MCF 10A (cell line): ENCODE measurements at regions of chr6 and their contacts with region 1.

Region 1: DNA sequence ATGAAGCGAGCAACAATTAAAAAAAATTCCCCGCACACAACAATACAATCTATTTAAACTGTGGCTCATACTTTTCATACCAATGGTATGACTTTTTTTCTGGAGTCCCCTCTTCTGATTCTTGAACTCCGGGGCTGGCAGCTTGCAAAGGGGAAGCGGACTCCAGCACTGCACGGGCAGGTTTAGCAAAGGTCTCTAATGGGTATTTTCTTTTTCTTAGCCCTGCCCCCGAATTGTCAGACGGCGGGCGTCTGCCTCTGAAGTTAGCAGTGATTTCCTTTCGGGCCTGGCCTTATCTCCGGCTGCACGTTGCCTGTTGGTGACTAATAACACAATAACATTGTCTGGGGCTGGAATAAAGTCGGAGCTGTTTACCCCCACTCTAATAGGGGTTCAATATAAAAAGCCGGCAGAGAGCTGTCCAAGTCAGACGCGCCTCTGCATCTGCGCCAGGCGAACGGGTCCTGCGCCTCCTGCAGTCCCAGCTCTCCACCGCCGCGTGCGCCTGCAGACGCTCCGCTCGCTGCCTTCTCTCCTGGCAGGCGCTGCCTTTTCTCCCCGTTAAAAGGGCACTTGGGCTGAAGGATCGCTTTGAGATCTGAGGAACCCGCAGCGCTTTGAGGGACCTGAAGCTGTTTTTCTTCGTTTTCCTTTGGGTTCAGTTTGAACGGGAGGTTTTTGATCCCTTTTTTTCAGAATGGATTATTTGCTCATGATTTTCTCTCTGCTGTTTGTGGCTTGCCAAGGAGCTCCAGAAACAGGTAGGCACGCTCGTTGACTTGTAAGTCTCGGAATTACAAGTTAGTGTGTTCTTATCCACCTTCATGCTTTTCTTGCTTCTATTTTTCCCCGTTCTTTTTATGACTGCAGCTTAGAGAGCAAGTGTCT is at the start of gene EDN1:
- DNase-seq: peak; percentile 86
- H3K4me3 Mint-ChIP-seq: peak within 1 kb of the TSS; percentile 75
- H3K27ac Mint-ChIP-seq: peak within 1 kb of the TSS; percentile 94
- H3K4me1 Mint-ChIP-seq: peaks cover 55% of the 10 kb centered on the region
- H3K27me3 Mint-ChIP-seq: no peaks in the 10 kb centered on the region
- CTCF ChIP-seq: peak; percentile 39
- total RNA-seq, gene EDN1: 1.2 and 2.7 TPM in 2 replicates

Region 2: GRCh38 chr6:12011276-12012076 is 278.7 kb before region 1 on chr6:
- CTCF ChIA-PET with region 1: interaction called, 9 read pairs
- POLR2A ChIA-PET with region 1: interaction called, 13 read pairs
- intact Hi-C with region 1: loop called (anchors 5 kb)
- DNase-seq: peak; percentile 97
- H3K4me3 Mint-ChIP-seq: peak overlapping the region; percentile 89
- H3K27ac Mint-ChIP-seq: peak overlapping the region; percentile 99
- H3K4me1 Mint-ChIP-seq: peaks cover 19% of the 10 kb centered on the region
- H3K27me3 Mint-ChIP-seq: no peaks in the 10 kb centered on the region
- CTCF ChIP-seq: no peak

Region 3: GRCh38 chr6:12245763-12246718 is 44.1 kb before region 1 on chr6:
- CTCF ChIA-PET with region 1: interaction called, 18 read pairs
- POLR2A ChIA-PET with region 1: interaction called, 14 read pairs
- intact Hi-C with region 1: no loop called
- DNase-seq: no peak
- H3K4me3 Mint-ChIP-seq: no peak overlapping the region
- H3K27ac Mint-ChIP-seq: no peak overlapping the region
- H3K4me1 Mint-ChIP-seq: peaks cover 5% of the 10 kb centered on the region
- H3K27me3 Mint-ChIP-seq: no peaks in the 10 kb centered on the region
- CTCF ChIP-seq: no peak

Region 4: DNA sequence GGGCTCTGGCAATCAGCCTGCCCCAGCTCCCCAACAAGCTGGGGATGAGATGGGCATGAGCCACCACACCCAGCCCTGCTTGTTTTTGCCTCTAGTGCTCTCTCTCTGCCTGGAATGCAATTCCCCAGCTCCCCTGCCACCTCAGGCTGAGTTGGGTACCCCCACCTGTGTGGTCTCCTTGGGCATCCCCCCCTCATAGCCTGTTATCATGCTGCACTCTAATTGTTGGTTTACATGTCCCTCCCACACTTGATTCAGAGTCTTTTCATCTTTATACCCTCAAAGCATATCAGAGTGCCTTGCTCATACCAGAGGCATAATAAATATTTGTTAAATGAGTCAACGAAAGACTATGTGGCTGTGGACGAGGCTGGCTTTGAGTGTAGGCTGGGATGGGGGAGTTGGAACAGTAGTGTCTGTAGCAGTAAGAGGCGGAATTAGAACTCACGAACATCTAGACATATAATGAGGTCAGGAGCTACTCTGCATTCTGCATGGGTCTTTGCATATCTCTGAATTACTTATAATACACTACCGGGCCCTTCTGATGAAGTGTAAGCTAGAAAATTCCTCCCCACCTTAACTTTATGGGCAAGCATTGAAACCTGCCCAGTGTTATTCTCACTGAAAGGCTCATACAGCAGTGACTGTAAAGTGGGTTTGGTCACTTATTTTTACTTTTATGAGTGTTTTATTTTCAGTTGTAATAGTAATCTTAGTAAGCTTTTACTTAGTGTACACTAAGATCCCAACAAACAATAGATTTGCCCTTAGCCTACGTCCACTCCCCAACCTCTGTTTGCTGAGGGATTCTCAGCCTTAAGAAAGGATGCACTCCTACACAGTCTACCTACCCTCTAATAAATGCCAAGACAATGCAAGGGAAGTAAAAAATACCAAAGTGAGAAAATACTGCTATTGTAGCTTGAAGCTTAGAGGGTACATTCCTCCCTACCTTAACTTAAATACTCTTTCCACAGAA is 58.6 kb after region 1 on chr6:
- CTCF ChIA-PET with region 1: interaction called, 3 read pairs
- POLR2A ChIA-PET with region 1: interaction called, 96 read pairs
- intact Hi-C with region 1: no loop called
- DNase-seq: peak; percentile 82
- H3K4me3 Mint-ChIP-seq: peak overlapping the region; percentile 19
- H3K27ac Mint-ChIP-seq: peak overlapping the region; percentile 95
- H3K4me1 Mint-ChIP-seq: peaks cover 32% of the 10 kb centered on the region
- H3K27me3 Mint-ChIP-seq: no peaks in the 10 kb centered on the region
- CTCF ChIP-seq: no peak

Region 5: GRCh38 chr6:12570461-12571030 is 280.4 kb after region 1 on chr6:
- CTCF ChIA-PET with region 1: no interaction called
- POLR2A ChIA-PET with region 1: interaction called, 16 read pairs
- intact Hi-C with region 1: no loop called
- DNase-seq: peak; percentile 31
- H3K4me3 Mint-ChIP-seq: no peak overlapping the region
- H3K27ac Mint-ChIP-seq: peak overlapping the region; percentile 29
- H3K4me1 Mint-ChIP-seq: peaks cover 33% of the 10 kb centered on the region
- H3K27me3 Mint-ChIP-seq: no peaks in the 10 kb centered on the region
- CTCF ChIP-seq: no peak

Region 6: GRCh38 chr6:12895721-12896120 is 605.5 kb after region 1 on chr6:
- CTCF ChIA-PET with region 1: interaction called, 4 read pairs
- POLR2A ChIA-PET with region 1: no interaction called
- intact Hi-C with region 1: loop called (anchors 2 kb)
- DNase-seq: no peak
- H3K4me3 Mint-ChIP-seq: no peak overlapping the region
- H3K27ac Mint-ChIP-seq: no peak overlapping the region
- H3K4me1 Mint-ChIP-seq: no peaks in the 10 kb centered on the region
- H3K27me3 Mint-ChIP-seq: peaks cover 73% of the 10 kb centered on the region
- CTCF ChIP-seq: no peak